CD8-positive, alpha-beta T cell (primary cell): ENCODE measurements at regions of chr2 and their contacts with region 1.

Region 1: GRCh38 chr2:43169987-43170386 is 56.4 kb downstream of the ZFP36L2 start:
- DNase-seq: peak; percentile 54 to 86 (median 72)
- ATAC-seq: peak; percentile 15
- H3K4me3 ChIP-seq: peak overlapping the region; percentile 27 to 32
- H3K4me3 Mint-ChIP-seq: peak overlapping the region; percentile 86
- H3K27ac ChIP-seq: peak overlapping the region; percentile 47 to 67
- H3K27ac Mint-ChIP-seq: peak overlapping the region; percentile 99
- H3K4me1 ChIP-seq: peaks cover 70% of the 10 kb centered on the region
- H3K4me1 Mint-ChIP-seq: peaks cover 82% of the 10 kb centered on the region
- H3K27me3 ChIP-seq: no peaks in the 10 kb centered on the region
- H3K27me3 Mint-ChIP-seq: no peaks in the 10 kb centered on the region
- CTCF ChIP-seq: peak; percentile 59

Region 2: DNA sequence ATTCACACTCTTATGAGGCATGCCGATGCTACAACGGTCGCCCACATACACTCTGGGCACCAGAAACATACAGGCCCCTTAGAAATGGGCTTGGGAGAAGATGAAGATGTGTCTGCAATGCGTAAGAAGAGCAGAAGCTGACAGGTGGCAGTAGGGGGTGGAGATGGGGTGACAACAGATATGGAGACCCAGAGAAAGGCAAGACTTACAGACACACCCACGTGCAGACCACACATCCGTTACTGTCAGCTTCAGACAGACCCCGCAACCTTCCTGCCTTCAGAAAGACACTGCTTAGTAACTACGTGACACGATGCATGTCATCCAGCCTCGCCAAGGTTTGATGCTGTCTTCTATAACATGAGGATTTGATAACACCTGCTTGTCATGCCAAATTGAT is 33.1 kb before region 1 on chr2:
- CTCF ChIA-PET with region 1: interaction called, 45 read pairs
- POLR2A ChIA-PET with region 1: interaction called, 245 read pairs
- intact Hi-C with region 1: loop called (anchors 1 kb)
- DNase-seq: peak; percentile 68 to 97 (median 84)
- ATAC-seq: peak; percentile 67
- H3K4me3 ChIP-seq: peak overlapping the region in 1 of 2 experiments; percentile 3
- H3K4me3 Mint-ChIP-seq: peak overlapping the region; percentile 62
- H3K27ac ChIP-seq: peak overlapping the region; percentile 88 to 90
- H3K27ac Mint-ChIP-seq: peak overlapping the region; percentile 100
- H3K4me1 ChIP-seq: peaks cover 95% of the 10 kb centered on the region
- H3K4me1 Mint-ChIP-seq: peaks cover 85% of the 10 kb centered on the region
- H3K27me3 ChIP-seq: no peaks in the 10 kb centered on the region
- H3K27me3 Mint-ChIP-seq: no peaks in the 10 kb centered on the region
- CTCF ChIP-seq: peak; percentile 21

Region 3: GRCh38 chr2:43142921-43143438 is 27.0 kb before region 1 on chr2:
- CTCF ChIA-PET with region 1: interaction called, 26 read pairs
- POLR2A ChIA-PET with region 1: interaction called, 245 read pairs
- intact Hi-C with region 1: no loop called
- DNase-seq: peak in 7 of 9 experiments; percentile 24 to 74 (median 51)
- ATAC-seq: peak; percentile 41
- H3K4me3 ChIP-seq: peak overlapping the region; percentile 37 to 53
- H3K4me3 Mint-ChIP-seq: peak overlapping the region; percentile 66
- H3K27ac ChIP-seq: peak overlapping the region; percentile 40 to 49
- H3K27ac Mint-ChIP-seq: peak overlapping the region; percentile 92
- H3K4me1 ChIP-seq: peaks cover 76% of the 10 kb centered on the region
- H3K4me1 Mint-ChIP-seq: peaks cover 70% of the 10 kb centered on the region
- H3K27me3 ChIP-seq: no peaks in the 10 kb centered on the region
- H3K27me3 Mint-ChIP-seq: no peaks in the 10 kb centered on the region
- CTCF ChIP-seq: no peak

Region 4: GRCh38 chr2:43186679-43187374 is 16.8 kb after region 1 on chr2:
- CTCF ChIA-PET with region 1: interaction called, 21 read pairs
- POLR2A ChIA-PET with region 1: interaction called, 5 read pairs
- intact Hi-C with region 1: no loop called
- DNase-seq: no peak
- ATAC-seq: no peak
- H3K4me3 ChIP-seq: no peak overlapping the region
- H3K4me3 Mint-ChIP-seq: no peak overlapping the region
- H3K27ac ChIP-seq: no peak overlapping the region
- H3K27ac Mint-ChIP-seq: no peak overlapping the region
- H3K4me1 ChIP-seq: peaks cover 46% of the 10 kb centered on the region
- H3K4me1 Mint-ChIP-seq: peaks cover 50% of the 10 kb centered on the region
- H3K27me3 ChIP-seq: no peaks in the 10 kb centered on the region
- H3K27me3 Mint-ChIP-seq: no peaks in the 10 kb centered on the region
- CTCF ChIP-seq: no peak

Region 5: DNA sequence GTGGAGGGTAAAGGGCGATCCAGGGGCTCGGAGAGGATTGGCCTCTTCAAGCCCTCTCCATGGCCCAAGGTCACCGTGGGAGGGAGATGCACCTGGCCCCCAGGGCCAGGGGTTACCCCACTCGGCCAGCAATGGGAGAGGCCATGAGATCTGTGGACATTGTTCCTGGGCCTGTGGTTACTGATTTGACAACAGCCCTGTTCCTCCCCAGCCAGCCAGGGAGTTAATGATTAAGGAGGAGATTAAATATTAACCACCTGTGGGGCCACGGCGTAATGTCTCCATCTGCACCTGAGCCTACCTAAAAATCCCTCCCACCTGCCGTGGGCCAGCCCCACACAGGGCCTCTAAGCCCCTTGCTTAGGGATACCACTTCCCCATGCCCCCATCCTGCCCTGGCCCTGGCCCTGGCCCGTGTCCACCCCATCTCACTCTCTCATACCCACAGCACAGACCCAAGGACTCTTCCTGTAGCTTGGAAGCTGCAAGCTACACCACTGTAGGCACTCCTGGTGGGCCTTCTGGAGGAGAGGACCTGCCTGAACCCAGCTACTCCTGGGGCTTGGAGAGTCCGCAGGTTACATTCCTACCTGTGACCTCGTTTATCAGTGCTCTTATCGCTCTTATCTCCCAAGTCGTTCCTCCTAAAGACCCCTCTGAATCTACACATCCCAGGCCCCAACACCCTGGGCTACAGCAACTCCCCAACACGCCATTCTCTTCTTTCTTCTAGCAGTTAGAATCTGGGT is 24.3 kb after region 1 on chr2:
- CTCF ChIA-PET with region 1: interaction called, 21 read pairs
- POLR2A ChIA-PET with region 1: interaction called, 44 read pairs
- intact Hi-C with region 1: loop called (anchors 1 kb)
- DNase-seq: no peak
- ATAC-seq: peak; percentile 0
- H3K4me3 ChIP-seq: peak overlapping the region; percentile 40 to 52
- H3K4me3 Mint-ChIP-seq: peak overlapping the region; percentile 83
- H3K27ac ChIP-seq: peak overlapping the region; percentile 68 to 88
- H3K27ac Mint-ChIP-seq: peak overlapping the region; percentile 98
- H3K4me1 ChIP-seq: peaks cover 65% of the 10 kb centered on the region
- H3K4me1 Mint-ChIP-seq: peaks cover 61% of the 10 kb centered on the region
- H3K27me3 ChIP-seq: no peaks in the 10 kb centered on the region
- H3K27me3 Mint-ChIP-seq: no peaks in the 10 kb centered on the region
- CTCF ChIP-seq: no peak

Region 6: GRCh38 chr2:43212931-43213330 is 42.9 kb after region 1 on chr2:
- CTCF ChIA-PET with region 1: interaction called, 537 read pairs
- POLR2A ChIA-PET with region 1: interaction called, 828 read pairs
- intact Hi-C with region 1: no loop called
- DNase-seq: peak in 1 of 9 experiments; percentile 44
- ATAC-seq: no peak
- H3K4me3 ChIP-seq: no peak overlapping the region
- H3K4me3 Mint-ChIP-seq: no peak overlapping the region
- H3K27ac ChIP-seq: no peak overlapping the region
- H3K27ac Mint-ChIP-seq: peak overlapping the region; percentile 83
- H3K4me1 ChIP-seq: peaks cover 47% of the 10 kb centered on the region
- H3K4me1 Mint-ChIP-seq: peaks cover 55% of the 10 kb centered on the region
- H3K27me3 ChIP-seq: no peaks in the 10 kb centered on the region
- H3K27me3 Mint-ChIP-seq: no peaks in the 10 kb centered on the region
- CTCF ChIP-seq: no peak

Region 7: DNA sequence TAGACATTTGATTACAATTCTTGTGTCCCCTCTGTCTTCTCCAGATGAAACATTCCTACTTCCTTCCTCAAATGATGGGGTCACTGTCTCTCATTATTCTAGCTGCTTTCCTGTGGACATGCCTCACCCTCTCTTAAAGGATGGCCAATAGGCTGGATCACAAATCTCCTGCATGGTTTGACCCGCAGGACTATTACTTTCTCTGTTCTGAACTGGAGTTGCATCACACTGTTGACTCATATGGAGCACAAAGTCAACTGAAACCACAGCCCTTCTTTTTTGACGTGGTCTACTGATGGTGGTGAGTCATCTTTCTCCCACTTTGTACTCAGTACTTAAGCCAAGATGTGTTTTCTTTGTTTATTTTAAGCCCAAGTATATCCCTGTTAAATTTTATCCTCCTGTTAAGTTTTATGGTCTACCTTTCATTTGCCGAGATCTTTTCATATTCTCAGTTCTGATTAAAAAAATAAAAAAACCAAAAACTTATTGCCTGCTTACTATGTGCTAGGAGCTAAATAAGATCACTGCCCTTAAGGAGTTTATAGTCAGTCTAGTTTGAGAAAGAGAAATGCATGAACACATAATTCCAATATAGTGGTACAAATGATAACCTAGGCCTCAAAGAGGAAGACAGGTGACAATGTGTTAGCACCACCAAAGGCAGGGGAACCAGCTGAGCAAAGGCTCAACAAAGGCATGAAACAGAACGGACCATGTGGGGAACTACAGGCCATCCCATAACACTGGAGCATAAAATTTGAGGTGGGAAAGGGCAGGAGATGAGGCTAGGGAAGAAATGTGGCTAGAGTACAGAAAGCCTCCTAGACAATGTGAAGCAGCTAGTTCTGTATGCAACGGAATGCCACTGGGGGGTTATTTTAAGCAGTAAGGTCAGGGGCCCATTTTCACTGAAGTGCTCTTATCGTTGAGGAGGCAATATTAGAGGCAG is 124.0 kb after region 1 on chr2:
- CTCF ChIA-PET with region 1: no interaction called
- POLR2A ChIA-PET with region 1: no interaction called
- intact Hi-C with region 1: no loop called
- DNase-seq: peak in 6 of 9 experiments; percentile 7 to 62 (median 40)
- ATAC-seq: peak; percentile 80
- H3K4me3 ChIP-seq: no peak overlapping the region
- H3K4me3 Mint-ChIP-seq: no peak overlapping the region
- H3K27ac ChIP-seq: no peak overlapping the region
- H3K27ac Mint-ChIP-seq: no peak overlapping the region
- H3K4me1 ChIP-seq: no peaks in the 10 kb centered on the region
- H3K4me1 Mint-ChIP-seq: peaks cover 14% of the 10 kb centered on the region
- H3K27me3 ChIP-seq: no peaks in the 10 kb centered on the region
- H3K27me3 Mint-ChIP-seq: no peaks in the 10 kb centered on the region
- CTCF ChIP-seq: no peak

Region 8: DNA sequence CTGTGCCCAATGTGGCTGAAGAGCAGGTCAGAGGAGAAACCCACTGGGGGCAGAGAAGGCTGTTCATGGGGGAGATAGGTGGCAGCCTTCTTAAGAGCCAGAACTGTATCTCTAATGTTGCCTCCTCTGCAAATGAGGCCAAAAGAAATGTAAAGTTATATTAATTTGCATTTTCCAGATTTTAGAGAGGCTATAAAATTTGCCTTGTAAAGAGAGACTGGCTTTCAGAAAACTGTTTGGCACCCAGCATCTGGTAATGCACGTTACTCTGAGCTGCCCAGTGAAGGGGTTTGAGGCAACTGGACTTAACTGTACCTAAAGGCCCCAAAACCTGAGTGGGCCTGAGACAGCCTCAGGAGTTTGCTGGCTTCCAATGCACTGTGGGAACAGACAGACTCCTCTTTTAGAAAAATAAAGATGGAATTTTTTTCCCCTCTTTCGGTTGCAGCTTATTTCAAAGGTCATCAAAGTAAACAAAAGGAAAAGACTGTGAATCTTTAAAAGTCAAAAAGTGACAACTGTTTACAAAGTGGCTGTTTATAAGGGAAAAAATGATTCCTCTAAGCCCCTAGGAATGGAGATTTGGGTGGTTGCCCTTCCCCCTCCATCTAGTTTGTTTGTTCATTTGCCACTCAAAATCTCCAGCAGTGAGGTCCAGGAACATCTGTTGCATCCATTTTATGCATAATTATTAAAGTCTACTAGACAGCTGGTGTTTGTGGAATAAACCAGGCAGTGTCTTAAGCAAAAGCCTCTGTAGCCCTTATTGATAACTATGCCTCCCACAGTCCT is 188.6 kb after region 1 on chr2:
- CTCF ChIA-PET with region 1: no interaction called
- POLR2A ChIA-PET with region 1: no interaction called
- intact Hi-C with region 1: no loop called
- DNase-seq: no peak
- ATAC-seq: no peak
- H3K4me3 ChIP-seq: no peak overlapping the region
- H3K4me3 Mint-ChIP-seq: no peak overlapping the region
- H3K27ac ChIP-seq: no peak overlapping the region
- H3K27ac Mint-ChIP-seq: no peak overlapping the region
- H3K4me1 ChIP-seq: no peaks in the 10 kb centered on the region
- H3K4me1 Mint-ChIP-seq: no peaks in the 10 kb centered on the region
- H3K27me3 ChIP-seq: no peaks in the 10 kb centered on the region
- H3K27me3 Mint-ChIP-seq: no peaks in the 10 kb centered on the region
- CTCF ChIP-seq: no peak

Region 9: GRCh38 chr2:43622931-43623451 is 453.0 kb after region 1 on chr2:
- CTCF ChIA-PET with region 1: no interaction called
- POLR2A ChIA-PET with region 1: no interaction called
- intact Hi-C with region 1: no loop called
- DNase-seq: no peak
- ATAC-seq: no peak
- H3K4me3 ChIP-seq: no peak overlapping the region
- H3K4me3 Mint-ChIP-seq: no peak overlapping the region
- H3K27ac ChIP-seq: no peak overlapping the region
- H3K27ac Mint-ChIP-seq: no peak overlapping the region
- H3K4me1 ChIP-seq: no peaks in the 10 kb centered on the region
- H3K4me1 Mint-ChIP-seq: no peaks in the 10 kb centered on the region
- H3K27me3 ChIP-seq: no peaks in the 10 kb centered on the region
- H3K27me3 Mint-ChIP-seq: peaks cover 27% of the 10 kb centered on the region
- CTCF ChIP-seq: no peak